PC-3 (cell line): ENCODE measurements at regions of chrX and their contacts with region 1.

Region 1: DNA sequence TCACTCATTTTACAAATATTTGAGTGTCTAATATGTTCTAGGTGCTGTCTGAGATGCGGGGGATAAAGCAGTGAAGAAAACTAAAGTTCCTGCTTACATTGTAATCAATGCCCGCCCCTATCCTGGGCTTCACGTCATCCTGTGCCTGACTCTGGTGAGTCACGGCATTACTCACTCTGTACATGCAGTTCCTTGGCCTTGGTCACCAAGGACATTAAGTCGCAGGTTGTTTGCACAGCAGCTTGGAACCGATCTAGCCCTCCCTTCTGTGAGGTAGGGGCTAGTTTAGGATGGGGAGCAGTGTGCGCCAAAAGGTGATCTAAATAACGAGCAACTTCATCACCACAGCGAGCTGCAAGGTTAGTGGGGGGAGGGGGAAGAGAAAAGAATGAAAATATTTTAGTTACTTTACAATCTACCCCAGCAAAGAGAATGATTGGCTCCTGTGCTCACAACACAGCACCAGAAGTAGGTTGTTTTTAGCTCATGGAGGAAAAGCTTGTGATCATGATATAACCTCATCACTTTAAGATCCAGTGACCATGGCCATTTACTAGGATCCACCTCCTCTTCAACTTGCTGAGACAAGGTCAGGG is 48.0 kb upstream of the HDAC8 start:
- DNase-seq: peak; percentile 96
- ATAC-seq: peak; percentile 78
- H3K4me3 ChIP-seq: peak overlapping the region; percentile 54
- H3K27ac ChIP-seq: peak overlapping the region; percentile 100
- H3K4me1 ChIP-seq: peaks cover 54% of the 10 kb centered on the region
- H3K27me3 ChIP-seq: no peaks in the 10 kb centered on the region
- CTCF ChIP-seq: no peak

Region 2: GRCh38 chrX:72181178-72182125 is 439.2 kb before region 1 on chrX and contains the start of gene PIN4:
- CTCF ChIA-PET with region 1: no interaction called
- POLR2A ChIA-PET with region 1: no interaction called
- intact Hi-C with region 1: loop called (anchors 5 kb)
- DNase-seq: peak; percentile 97
- ATAC-seq: peak; percentile 96
- H3K4me3 ChIP-seq: peak within 1 kb of the TSS; percentile 78
- H3K27ac ChIP-seq: peak within 1 kb of the TSS; percentile 74
- H3K4me1 ChIP-seq: peaks cover 12% of the 10 kb centered on the region
- H3K27me3 ChIP-seq: no peaks in the 10 kb centered on the region
- CTCF ChIP-seq: no peak
- total RNA-seq, gene PIN4: 30.0 and 44.1 TPM in 2 replicates

Region 3: GRCh38 chrX:72572248-72573157 is 48.1 kb before region 1 on chrX and contains the start of gene HDAC8:
- CTCF ChIA-PET with region 1: no interaction called
- POLR2A ChIA-PET with region 1: no interaction called
- intact Hi-C with region 1: loop called (anchors 2 kb)
- DNase-seq: peak; percentile 80
- ATAC-seq: peak; percentile 51
- H3K4me3 ChIP-seq: peak within 1 kb of the TSS; percentile 74
- H3K27ac ChIP-seq: peak within 1 kb of the TSS; percentile 21
- H3K4me1 ChIP-seq: peaks cover 45% of the 10 kb centered on the region
- H3K27me3 ChIP-seq: no peaks in the 10 kb centered on the region
- CTCF ChIP-seq: no peak
- total RNA-seq, gene HDAC8: 28.5 and 40.5 TPM in 2 replicates

Region 4: GRCh38 chrX:72714476-72714916 is 93.8 kb after region 1 on chrX:
- CTCF ChIA-PET with region 1: interaction called, 3 read pairs
- POLR2A ChIA-PET with region 1: interaction called, 32 read pairs
- intact Hi-C with region 1: loop called (anchors 5 kb)
- DNase-seq: peak; percentile 73
- ATAC-seq: peak; percentile 78
- H3K4me3 ChIP-seq: peak overlapping the region; percentile 71
- H3K27ac ChIP-seq: peak overlapping the region; percentile 88
- H3K4me1 ChIP-seq: peaks cover 5% of the 10 kb centered on the region; the same call in 1 of the 2 replicates
- H3K27me3 ChIP-seq: no peaks in the 10 kb centered on the region
- CTCF ChIP-seq: 0 out of 2 replicates have a peak, but pooled peaks have one; percentile 11